Naive thymus-derived CD4-positive, alpha-beta T cell (primary cell): ENCODE measurements at regions of chr3 and their contacts with region 1.

Region 1: GRCh38 chr3:143001369-143002082 is at the start of gene U2SURP:
- DNase-seq: peak; percentile 77 to 95 (median 88)
- ATAC-seq: peak; percentile 99
- H3K4me3 ChIP-seq: peak within 1 kb of the TSS; percentile 96
- H3K4me3 Mint-ChIP-seq: peak within 1 kb of the TSS; percentile 91 to 100 (median 98)
- H3K27ac ChIP-seq: peak within 1 kb of the TSS; percentile 95
- H3K27ac Mint-ChIP-seq: peak within 1 kb of the TSS; percentile 96 to 100 (median 99)
- H3K4me1 ChIP-seq: peaks cover 13 to 20% of the 10 kb centered on the region in 2 donors
- H3K4me1 Mint-ChIP-seq: peaks cover 34 to 63% (median 53%) of the 10 kb centered on the region in 7 donors
- H3K27me3 ChIP-seq: no peaks in the 10 kb centered on the region
- H3K27me3 Mint-ChIP-seq: peaks cover 0 to 5% (median 2%) of the 10 kb centered on the region in 5 donors
- total RNA-seq, gene U2SURP: 132 to 172 (median 158) TPM

Region 2: DNA sequence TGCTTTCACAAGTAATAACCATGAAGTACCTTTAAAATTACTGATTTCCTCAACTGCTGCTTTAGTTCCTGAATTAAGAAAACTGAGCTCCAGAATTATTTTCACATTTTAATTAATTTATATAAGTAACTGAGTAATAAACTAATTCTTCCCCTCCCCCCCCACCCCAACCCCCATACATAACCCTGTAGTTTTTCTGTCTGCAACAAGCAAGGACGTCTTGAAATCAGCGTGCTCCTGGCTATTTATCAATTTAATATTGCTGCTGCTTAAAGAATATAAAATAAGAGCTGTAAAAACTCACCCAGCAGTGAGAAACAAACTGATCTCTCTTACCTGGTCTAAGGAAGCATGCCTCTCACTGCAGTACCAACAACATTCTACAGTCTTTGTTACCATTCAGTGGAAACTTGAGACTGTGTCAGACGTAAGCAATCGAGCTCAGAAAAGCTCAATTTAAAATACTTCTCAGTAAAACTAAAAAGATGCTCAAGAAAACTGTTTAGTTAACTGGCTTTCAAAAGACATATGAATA is 973.2 kb before region 1 on chr3:
- CTCF ChIA-PET with region 1: no interaction called
- POLR2A ChIA-PET with region 1: interaction called, 4 read pairs
- intact Hi-C with region 1: loop called (anchors 1 to 5 kb)
- DNase-seq: peak in 7 of 9 donors; percentile 45 to 72 (median 63)
- ATAC-seq: peak; percentile 90
- H3K4me3 ChIP-seq: peak overlapping the region; percentile 47
- H3K4me3 Mint-ChIP-seq: peak overlapping the region; percentile 81 to 97 (median 90)
- H3K27ac ChIP-seq: peak overlapping the region; percentile 57
- H3K27ac Mint-ChIP-seq: peak overlapping the region; percentile 49 to 92 (median 82)
- H3K4me1 ChIP-seq: no peaks in the 10 kb centered on the region
- H3K4me1 Mint-ChIP-seq: peaks cover 13 to 50% (median 49%) of the 10 kb centered on the region in 7 donors
- H3K27me3 ChIP-seq: no peaks in the 10 kb centered on the region
- H3K27me3 Mint-ChIP-seq: no peaks in the 10 kb centered on the region

Region 3: GRCh38 chr3:142447852-142448823 is 553.4 kb before region 1 on chr3 and contains the start of gene XRN1:
- CTCF ChIA-PET with region 1: no interaction called
- POLR2A ChIA-PET with region 1: interaction called, 7 read pairs
- intact Hi-C with region 1: loop called (anchors 1 kb)
- DNase-seq: peak; percentile 90 to 97 (median 94)
- ATAC-seq: peak; percentile 99
- H3K4me3 ChIP-seq: peak within 1 kb of the TSS; percentile 78
- H3K4me3 Mint-ChIP-seq: peak within 1 kb of the TSS; percentile 89 to 100 (median 98)
- H3K27ac ChIP-seq: peak within 1 kb of the TSS; percentile 99
- H3K27ac Mint-ChIP-seq: peak within 1 kb of the TSS; percentile 98 to 100 (median 99)
- H3K4me1 ChIP-seq: peaks cover 31% of the 10 kb centered on the region in 2 donors
- H3K4me1 Mint-ChIP-seq: peaks cover 26 to 55% (median 51%) of the 10 kb centered on the region in 7 donors
- H3K27me3 ChIP-seq: no peaks in the 10 kb centered on the region
- H3K27me3 Mint-ChIP-seq: no peaks in the 10 kb centered on the region
- total RNA-seq, gene XRN1: 86.1 to 123 (median 103) TPM

Region 4: DNA sequence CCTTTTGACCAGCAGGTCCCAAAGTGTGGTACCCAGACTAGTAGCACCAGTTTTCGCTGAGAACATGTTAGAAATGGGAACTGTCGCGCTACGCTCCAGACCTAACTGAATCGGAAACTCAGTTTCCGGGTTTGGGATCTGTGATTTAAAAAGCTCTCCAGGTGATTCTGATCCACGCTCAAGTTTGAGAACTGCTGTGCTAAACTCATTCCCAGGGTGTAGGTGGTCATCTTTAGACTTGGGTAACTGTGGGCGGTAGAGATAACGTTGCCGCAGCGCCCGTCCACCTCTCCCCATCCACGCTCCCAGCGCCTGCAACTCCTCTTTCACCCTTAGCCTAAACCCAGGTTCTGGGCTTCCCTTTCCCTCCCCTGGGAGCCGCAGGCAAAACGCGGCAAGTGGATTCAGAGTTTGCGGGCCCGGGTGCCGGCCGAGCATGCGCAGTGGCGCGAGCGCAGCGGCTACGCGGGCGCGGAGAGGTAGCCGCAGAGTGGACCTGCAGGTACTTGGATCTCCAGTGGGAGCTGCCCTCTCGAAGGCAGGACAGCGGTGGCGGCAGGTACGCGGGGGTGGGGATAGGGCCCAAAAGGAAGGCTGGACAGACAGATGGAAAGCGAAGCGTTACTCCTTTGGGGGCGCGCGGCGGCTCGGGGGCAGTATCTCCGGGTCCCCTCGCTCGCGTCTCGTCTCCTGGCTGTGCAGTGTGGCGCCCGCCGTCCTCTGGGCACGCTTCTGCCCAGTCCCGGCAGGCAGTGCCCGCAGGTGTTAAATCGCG is 405.4 kb before region 1 on chr3 and contains the start of gene PLS1:
- CTCF ChIA-PET with region 1: interaction called, 3 read pairs
- POLR2A ChIA-PET with region 1: interaction called, 3 read pairs
- intact Hi-C with region 1: loop called in 1 of 2 experiments (anchors 1 kb)
- DNase-seq: peak; percentile 74 to 97 (median 85)
- ATAC-seq: peak; percentile 91
- H3K4me3 ChIP-seq: peak within 1 kb of the TSS; percentile 82
- H3K4me3 Mint-ChIP-seq: peak within 1 kb of the TSS; percentile 96 to 100 (median 98)
- H3K27ac ChIP-seq: peak within 1 kb of the TSS; percentile 67
- H3K27ac Mint-ChIP-seq: peak within 1 kb of the TSS; percentile 83 to 95 (median 91)
- H3K4me1 ChIP-seq: peaks cover 0 to 3% of the 10 kb centered on the region in 2 donors
- H3K4me1 Mint-ChIP-seq: peaks cover 0 to 32% (median 20%) of the 10 kb centered on the region in 7 donors
- H3K27me3 ChIP-seq: no peaks in the 10 kb centered on the region
- H3K27me3 Mint-ChIP-seq: peaks cover 0 to 11% (median 0%) of the 10 kb centered on the region in 5 donors
- total RNA-seq, gene PLS1: 1.6 to 2.8 (median 2.0) TPM

Region 5: GRCh38 chr3:143070977-143071551 is 69.5 kb after region 1 on chr3:
- CTCF ChIA-PET with region 1: no interaction called
- POLR2A ChIA-PET with region 1: no interaction called
- intact Hi-C with region 1: no loop called
- DNase-seq: no peak
- ATAC-seq: no peak
- H3K4me3 ChIP-seq: no peak overlapping the region
- H3K4me3 Mint-ChIP-seq: no peak overlapping the region
- H3K27ac ChIP-seq: no peak overlapping the region
- H3K27ac Mint-ChIP-seq: no peak overlapping the region
- H3K4me1 ChIP-seq: no peaks in the 10 kb centered on the region
- H3K4me1 Mint-ChIP-seq: no peaks in the 10 kb centered on the region
- H3K27me3 ChIP-seq: no peaks in the 10 kb centered on the region
- H3K27me3 Mint-ChIP-seq: no peaks in the 10 kb centered on the region

Region 6: DNA sequence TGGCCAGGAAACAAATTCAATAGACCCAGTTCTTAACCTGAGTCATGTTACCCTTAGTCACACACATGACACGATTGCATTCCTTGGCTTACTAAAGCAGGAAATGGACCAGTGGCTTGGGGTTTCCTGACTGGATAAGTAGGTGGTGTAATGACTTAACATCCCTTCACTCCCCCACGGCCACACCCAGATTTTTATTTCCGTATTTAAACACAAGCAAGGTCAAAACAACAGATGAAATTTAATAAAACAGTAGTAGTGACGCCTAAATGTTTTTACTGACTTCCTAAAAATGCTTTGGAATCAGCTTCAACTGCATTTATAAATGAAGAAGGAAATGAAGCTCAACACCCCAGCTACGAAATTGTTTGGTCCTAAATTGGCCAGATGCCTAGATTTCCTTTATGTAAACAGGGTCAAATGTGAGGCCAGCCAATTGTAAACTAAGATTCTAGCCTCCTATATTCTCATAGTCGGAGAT is 442.4 kb after region 1 on chr3:
- CTCF ChIA-PET with region 1: no interaction called
- POLR2A ChIA-PET with region 1: no interaction called
- intact Hi-C with region 1: no loop called
- DNase-seq: peak in 1 of 9 donors; percentile 30
- ATAC-seq: peak; percentile 90
- H3K4me3 ChIP-seq: no peak overlapping the region
- H3K4me3 Mint-ChIP-seq: peak overlapping the region in 7 of 10 donors; percentile 9 to 51 (median 26)
- H3K27ac ChIP-seq: no peak overlapping the region
- H3K27ac Mint-ChIP-seq: peak overlapping the region in 2 of 9 donors; percentile 9 to 58
- H3K4me1 ChIP-seq: peaks cover 7 to 18% of the 10 kb centered on the region in 2 donors
- H3K4me1 Mint-ChIP-seq: peaks cover 19 to 27% (median 27%) of the 10 kb centered on the region in 7 donors
- H3K27me3 ChIP-seq: no peaks in the 10 kb centered on the region
- H3K27me3 Mint-ChIP-seq: no peaks in the 10 kb centered on the region

Region 7: DNA sequence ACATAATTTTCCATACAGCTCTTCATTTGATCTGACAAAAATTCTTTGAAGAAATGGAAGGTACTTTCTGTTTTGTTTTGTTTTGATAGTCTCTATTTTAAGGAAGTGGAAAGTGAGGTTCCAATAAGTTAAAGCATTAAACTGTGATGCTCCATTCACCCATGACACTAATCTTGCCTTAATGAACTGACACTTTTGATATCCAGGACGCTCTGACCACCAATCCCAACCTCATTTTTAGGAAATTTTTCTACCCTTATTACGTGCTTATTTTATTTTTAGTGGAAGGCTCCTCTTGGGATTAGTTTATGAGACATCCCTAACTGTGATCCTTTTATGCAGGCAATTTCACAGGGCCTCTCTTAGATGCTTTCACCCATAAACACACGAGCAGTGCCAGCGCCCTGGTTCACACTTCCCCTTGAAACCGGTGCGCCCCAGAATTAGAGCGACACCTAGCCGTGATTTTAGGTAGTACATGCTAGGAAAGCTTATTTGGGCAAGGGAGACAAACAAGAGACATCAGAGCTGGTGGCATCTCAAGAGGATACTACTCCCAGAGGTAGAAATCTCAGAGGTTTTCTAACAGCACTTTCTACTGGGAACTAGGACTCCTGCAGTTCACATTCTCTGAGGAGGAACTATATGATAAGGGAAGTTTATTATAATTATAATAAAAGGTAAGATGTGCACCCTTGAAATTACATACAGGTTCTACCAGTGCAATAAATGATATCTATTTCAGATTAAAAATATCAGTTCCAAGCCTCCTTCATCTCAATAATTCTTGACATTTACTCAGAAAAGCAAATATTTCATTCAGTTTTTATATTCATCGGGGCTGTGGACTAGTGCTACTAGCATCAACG is 672.8 kb after region 1 on chr3:
- CTCF ChIA-PET with region 1: no interaction called
- POLR2A ChIA-PET with region 1: interaction called, 3 read pairs
- intact Hi-C with region 1: loop called in 1 of 2 experiments (anchors 5 kb)
- DNase-seq: peak; percentile 40 to 86 (median 73)
- ATAC-seq: peak; percentile 96
- H3K4me3 ChIP-seq: no peak overlapping the region
- H3K4me3 Mint-ChIP-seq: peak overlapping the region in 9 of 10 donors; percentile 7 to 73 (median 45)
- H3K27ac ChIP-seq: no peak overlapping the region
- H3K27ac Mint-ChIP-seq: peak overlapping the region in 6 of 9 donors; percentile 14 to 86 (median 57)
- H3K4me1 ChIP-seq: peaks cover 0 to 6% of the 10 kb centered on the region in 2 donors
- H3K4me1 Mint-ChIP-seq: peaks cover 7 to 17% (median 9%) of the 10 kb centered on the region in 7 donors
- H3K27me3 ChIP-seq: no peaks in the 10 kb centered on the region
- H3K27me3 Mint-ChIP-seq: no peaks in the 10 kb centered on the region